ENCODE measurements at regions of chr6 and their contacts with region 1.

Region 1: DNA sequence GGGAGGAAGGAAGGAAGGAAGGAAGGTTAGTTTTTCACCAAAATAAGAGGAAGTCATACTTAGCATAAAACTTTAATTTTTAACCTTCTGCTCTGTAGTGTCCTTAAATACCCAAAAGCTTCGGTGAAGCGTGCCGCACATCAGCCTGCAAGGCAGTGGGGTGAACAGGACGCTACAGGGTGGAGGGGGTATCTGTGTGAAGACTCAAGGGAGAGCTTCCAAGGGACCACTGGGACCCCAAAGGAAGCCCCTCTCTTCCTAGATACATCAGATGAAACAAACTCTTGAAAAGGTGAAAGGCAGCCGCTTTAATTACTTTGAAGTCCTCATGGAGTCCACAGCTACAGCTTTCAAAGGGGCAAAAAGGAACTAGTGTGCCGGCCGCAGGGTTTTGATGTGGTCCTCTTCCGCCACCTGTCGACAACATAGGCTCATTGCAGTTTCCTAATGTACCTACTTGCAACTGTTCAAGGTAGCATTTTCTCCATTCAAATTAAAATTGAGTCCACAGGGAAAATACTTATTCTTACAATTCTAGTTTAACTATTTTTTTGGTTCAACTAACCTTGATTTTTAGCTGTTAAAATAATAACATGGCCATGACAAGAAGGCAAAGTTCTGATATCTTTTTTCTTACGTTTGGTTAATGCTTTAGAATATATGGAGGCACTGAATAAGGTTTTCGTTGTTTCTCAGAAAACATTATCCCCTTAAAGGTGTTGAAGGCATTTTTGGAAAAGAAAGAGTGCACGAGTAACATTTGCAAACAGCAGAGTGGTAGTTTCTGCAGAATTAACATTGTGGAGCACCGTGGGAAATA is 135.0 kb upstream of the RIPOR2 start:
- DNase-seq: peak; percentile 61 to 84 (median 73)
- ATAC-seq: peak; percentile 68 to 87
- H3K4me3 ChIP-seq: no peak overlapping the region
- H3K27ac ChIP-seq: no peak overlapping the region
- H3K4me1 ChIP-seq: peaks cover 2% of the 10 kb centered on the region
- H3K27me3 ChIP-seq: no peaks in the 10 kb centered on the region

Region 2: GRCh38 chr6:24855395-24856245 is 215.1 kb before region 1 on chr6:
- intact Hi-C with region 1: loop called (anchors 2 to 5 kb)
- DNase-seq: peak in 2 of 3 donors; percentile 44 to 75
- ATAC-seq: peak; percentile 66 to 68
- H3K4me3 ChIP-seq: no peak overlapping the region
- H3K27ac ChIP-seq: no peak overlapping the region
- H3K4me1 ChIP-seq: no peaks in the 10 kb centered on the region
- H3K27me3 ChIP-seq: no peaks in the 10 kb centered on the region